ENCODE measurements at regions of chr4 and their contacts with region 1.

Region 1: GRCh38 chr4:139651282-139652194 is 14.1 kb upstream of the MGST2 start:
- DNase-seq: peak; percentile 32 to 69 (median 57)
- ATAC-seq: peak; percentile 91
- H3K4me3 ChIP-seq: no peak overlapping the region
- H3K4me3 Mint-ChIP-seq: peak overlapping the region in 6 of 10 donors; percentile 0 to 46 (median 26)
- H3K27ac ChIP-seq: no peak overlapping the region
- H3K27ac Mint-ChIP-seq: peak overlapping the region in 1 of 9 donors; percentile 56
- H3K4me1 ChIP-seq: no peaks in the 10 kb centered on the region
- H3K4me1 Mint-ChIP-seq: peaks cover 0 to 13% (median 5%) of the 10 kb centered on the region in 7 donors
- H3K27me3 ChIP-seq: no peaks in the 10 kb centered on the region
- H3K27me3 Mint-ChIP-seq: peaks cover 0 to 9% (median 5%) of the 10 kb centered on the region in 5 donors

Region 2: DNA sequence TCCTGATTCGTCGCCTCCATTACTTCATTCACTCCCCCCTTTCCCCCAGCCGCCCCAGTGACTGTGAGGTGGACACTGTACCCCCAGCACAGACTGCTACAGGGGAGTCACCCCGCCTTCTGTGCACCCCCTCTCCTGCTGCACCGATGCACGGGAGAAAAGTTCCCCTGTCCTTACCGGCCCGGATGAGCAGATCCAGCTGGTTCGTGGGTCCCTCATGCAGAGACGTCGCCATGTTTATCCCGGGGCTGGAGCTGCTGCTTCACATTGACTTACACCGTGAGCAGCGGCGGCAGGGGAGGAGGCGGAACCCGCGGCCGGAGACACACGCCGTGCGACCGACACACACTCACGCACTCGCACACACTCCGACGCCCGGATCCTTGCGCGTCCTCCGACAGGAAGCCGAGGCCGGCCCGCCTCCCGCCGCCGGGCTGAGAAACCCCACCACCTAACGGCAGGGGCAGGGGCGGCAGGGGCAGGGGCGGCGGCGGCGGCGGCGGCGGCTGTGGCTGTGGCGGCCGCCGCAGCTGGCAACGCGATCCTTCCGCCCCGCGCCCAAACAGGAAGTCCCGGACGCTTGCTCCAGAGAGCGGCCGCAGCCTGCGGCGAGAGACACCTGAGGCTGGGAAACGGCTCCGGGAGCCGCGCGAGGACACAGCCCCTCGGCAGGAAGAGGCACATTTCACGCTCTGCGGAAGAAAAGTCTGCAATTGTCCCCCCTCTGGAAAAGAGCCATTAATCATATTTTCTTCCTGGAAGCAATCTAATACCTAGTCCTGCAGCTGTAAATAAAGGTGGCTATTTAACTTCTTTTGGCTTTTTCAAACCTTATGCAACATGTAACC is 567.4 kb before region 1 on chr4:
- CTCF ChIA-PET with region 1: no interaction called
- POLR2A ChIA-PET with region 1: no interaction called
- intact Hi-C with region 1: loop called in 1 of 2 experiments (anchors 10 kb)
- DNase-seq: peak; percentile 54 to 88 (median 84)
- ATAC-seq: peak; percentile 64
- H3K4me3 ChIP-seq: peak overlapping the region; percentile 99
- H3K4me3 Mint-ChIP-seq: peak overlapping the region; percentile 90 to 100 (median 92)
- H3K27ac ChIP-seq: peak overlapping the region; percentile 96
- H3K27ac Mint-ChIP-seq: peak overlapping the region; percentile 85 to 100 (median 96)
- H3K4me1 ChIP-seq: peaks cover 16 to 27% of the 10 kb centered on the region in 2 donors
- H3K4me1 Mint-ChIP-seq: peaks cover 16 to 49% (median 41%) of the 10 kb centered on the region in 7 donors
- H3K27me3 ChIP-seq: no peaks in the 10 kb centered on the region
- H3K27me3 Mint-ChIP-seq: no peaks in the 10 kb centered on the region

Region 3: DNA sequence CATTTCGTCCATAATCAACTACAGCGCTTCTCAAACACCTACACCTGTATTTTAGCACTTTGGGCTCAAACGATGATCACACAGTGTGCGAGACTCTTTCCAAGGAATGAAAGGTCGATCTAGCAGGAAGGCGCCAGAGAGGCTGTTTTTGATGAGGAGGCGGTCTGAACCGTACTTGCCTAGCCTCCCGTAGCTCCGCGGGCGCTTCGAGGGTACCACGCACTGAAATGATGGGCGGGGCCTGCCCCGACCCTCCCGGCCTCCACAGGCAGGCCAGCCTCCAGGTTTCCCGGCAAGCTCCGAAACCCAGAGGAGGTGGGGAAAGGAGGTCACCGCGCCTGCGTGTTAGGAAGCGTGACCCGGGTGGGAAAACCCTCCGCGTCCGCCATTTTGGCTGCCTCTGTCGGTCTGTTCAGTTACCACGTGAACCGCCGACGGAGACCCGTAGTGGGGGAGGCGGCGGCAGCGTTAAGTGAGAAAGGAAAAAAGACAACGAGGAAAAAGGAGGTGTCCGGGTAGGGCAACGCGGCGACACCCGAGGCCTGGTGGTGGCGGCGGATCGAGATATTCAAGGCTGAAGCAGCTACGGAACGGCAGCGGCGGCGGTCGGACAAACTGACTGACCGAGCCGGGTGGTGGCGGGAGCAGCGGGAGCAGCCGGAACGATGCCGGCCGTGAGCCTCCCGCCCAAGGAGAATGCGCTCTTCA is 350.3 kb before region 1 on chr4 and contains the start of gene NAA15:
- CTCF ChIA-PET with region 1: no interaction called
- POLR2A ChIA-PET with region 1: no interaction called
- intact Hi-C with region 1: loop called in 1 of 2 experiments (anchors 10 kb)
- DNase-seq: peak; percentile 88 to 99 (median 97)
- ATAC-seq: peak; percentile 95
- H3K4me3 ChIP-seq: peak within 1 kb of the TSS; percentile 83
- H3K4me3 Mint-ChIP-seq: peak within 1 kb of the TSS; percentile 96 to 100 (median 100)
- H3K27ac ChIP-seq: peak within 1 kb of the TSS; percentile 92
- H3K27ac Mint-ChIP-seq: peak within 1 kb of the TSS; percentile 97 to 100 (median 99)
- H3K4me1 ChIP-seq: peaks cover 22 to 28% of the 10 kb centered on the region in 2 donors
- H3K4me1 Mint-ChIP-seq: peaks cover 17 to 76% (median 58%) of the 10 kb centered on the region in 7 donors
- H3K27me3 ChIP-seq: no peaks in the 10 kb centered on the region
- H3K27me3 Mint-ChIP-seq: no peaks in the 10 kb centered on the region
- total RNA-seq, gene NAA15: 41.2 to 67.4 (median 49.0) TPM

Region 4: DNA sequence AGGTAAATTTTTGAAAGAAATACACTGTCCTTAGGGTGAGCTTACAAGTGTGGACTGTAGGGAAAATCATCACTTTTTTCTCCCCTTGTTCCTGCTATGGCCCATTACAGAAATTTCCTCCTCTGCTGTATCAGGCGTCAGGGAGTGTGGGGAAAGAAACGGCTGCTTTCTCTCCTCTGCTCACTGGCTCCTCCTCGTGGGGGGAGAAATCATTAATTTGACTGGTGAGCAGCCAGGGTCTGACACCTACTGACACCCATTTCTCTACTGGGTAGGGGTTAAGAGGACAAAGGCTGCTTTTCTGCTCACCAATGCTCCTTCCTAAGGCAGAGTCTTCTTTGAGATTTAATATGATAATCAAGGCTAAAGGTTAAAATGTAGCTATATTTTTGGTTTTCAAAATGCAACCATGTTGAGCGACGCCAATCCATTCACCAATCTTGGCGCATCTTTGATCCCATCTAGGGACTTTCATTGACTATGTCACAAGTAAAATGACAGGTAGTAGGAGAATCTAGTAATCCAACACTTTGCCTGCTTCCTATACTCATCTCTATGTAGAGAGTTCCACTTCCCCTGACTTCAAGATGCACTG is 120.6 kb before region 1 on chr4:
- CTCF ChIA-PET with region 1: interaction called, 5 read pairs
- POLR2A ChIA-PET with region 1: no interaction called
- intact Hi-C with region 1: loop called in 1 of 2 experiments (anchors 1 kb)
- DNase-seq: peak; percentile 29 to 63 (median 50)
- ATAC-seq: peak; percentile 79
- H3K4me3 ChIP-seq: no peak overlapping the region
- H3K4me3 Mint-ChIP-seq: no peak overlapping the region
- H3K27ac ChIP-seq: no peak overlapping the region
- H3K27ac Mint-ChIP-seq: no peak overlapping the region
- H3K4me1 ChIP-seq: peaks cover 0 to 14% of the 10 kb centered on the region in 2 donors
- H3K4me1 Mint-ChIP-seq: peaks cover 0 to 10% (median 0%) of the 10 kb centered on the region in 7 donors
- H3K27me3 ChIP-seq: no peaks in the 10 kb centered on the region
- H3K27me3 Mint-ChIP-seq: no peaks in the 10 kb centered on the region

Region 5: DNA sequence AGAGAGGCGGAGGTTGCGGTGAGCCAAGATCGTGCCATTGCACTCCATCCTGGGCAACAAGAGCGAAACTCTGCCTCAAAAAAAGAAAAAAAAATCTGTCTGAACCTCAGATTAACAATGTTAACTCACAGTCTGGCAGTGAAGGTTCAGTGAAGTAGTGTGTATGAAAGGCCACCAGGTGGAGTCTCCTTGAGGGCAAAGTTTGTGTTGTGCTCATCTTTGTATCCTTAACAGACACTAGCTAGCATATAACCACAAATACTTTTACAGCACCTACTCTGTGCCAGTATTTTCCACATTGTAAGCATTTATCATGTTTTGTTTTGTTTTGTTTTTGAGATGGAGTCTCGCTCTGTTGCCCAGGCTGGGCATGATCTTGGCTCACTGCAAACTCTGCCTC is 31.9 kb before region 1 on chr4:
- CTCF ChIA-PET with region 1: no interaction called
- POLR2A ChIA-PET with region 1: no interaction called
- intact Hi-C with region 1: loop called in 1 of 2 experiments (anchors 1 kb)
- DNase-seq: no peak
- ATAC-seq: no peak
- H3K4me3 ChIP-seq: no peak overlapping the region
- H3K4me3 Mint-ChIP-seq: no peak overlapping the region
- H3K27ac ChIP-seq: no peak overlapping the region
- H3K27ac Mint-ChIP-seq: no peak overlapping the region
- H3K4me1 ChIP-seq: no peaks in the 10 kb centered on the region
- H3K4me1 Mint-ChIP-seq: no peaks in the 10 kb centered on the region
- H3K27me3 ChIP-seq: no peaks in the 10 kb centered on the region
- H3K27me3 Mint-ChIP-seq: peaks cover 10 to 15% (median 11%) of the 10 kb centered on the region in 5 donors

Measured in naive thymus-derived CD4-positive, alpha-beta T cell (primary cell).